ENCODE measurements at regions of chr6 and their contacts with region 1.

Region 1: GRCh38 chr6:43391440-43392031 is 22.1 kb upstream of the ZNF318 start:
- DNase-seq: no peak

Region 2: DNA sequence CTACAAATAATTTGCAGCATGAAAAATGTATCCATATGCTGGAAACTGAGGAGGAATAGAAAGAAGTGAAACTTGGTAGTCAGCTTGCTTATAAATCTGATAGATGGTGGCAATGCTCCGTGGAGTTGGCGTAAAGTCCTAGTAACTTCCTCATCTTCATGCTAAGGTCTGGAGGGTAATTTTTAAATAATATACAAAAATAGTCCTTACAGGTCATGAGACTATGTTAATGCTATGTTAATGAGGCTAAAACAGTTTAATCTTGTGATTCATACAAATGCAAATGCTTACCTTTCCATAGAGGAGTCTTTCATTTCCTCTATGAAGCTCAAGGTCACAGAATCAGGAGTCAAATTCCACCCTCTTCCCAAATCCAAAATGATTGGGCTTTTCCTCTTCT is 73.5 kb before region 1 on chr6:
- CTCF ChIA-PET with region 1: no interaction called
- POLR2A ChIA-PET with region 1: no interaction called
- DNase-seq: no peak

Region 3: GRCh38 chr6:43369174-43370022 is 22.1 kb before region 1 on chr6 and contains the start of gene ZNF318:
- CTCF ChIA-PET with region 1: interaction called, 7 read pairs
- POLR2A ChIA-PET with region 1: interaction called, 42 read pairs
- DNase-seq: peak; percentile 95

Region 4: GRCh38 chr6:43402820-43403219 is 11.3 kb after region 1 on chr6:
- CTCF ChIA-PET with region 1: no interaction called
- POLR2A ChIA-PET with region 1: no interaction called
- DNase-seq: no peak

Region 5: GRCh38 chr6:43436577-43437282 is 45.2 kb after region 1 on chr6:
- CTCF ChIA-PET with region 1: no interaction called
- POLR2A ChIA-PET with region 1: no interaction called
- DNase-seq: no peak

Measured in HEK293T (cell line).